ENCODE measurements at regions of chr3 and their contacts with region 1.

Region 1: DNA sequence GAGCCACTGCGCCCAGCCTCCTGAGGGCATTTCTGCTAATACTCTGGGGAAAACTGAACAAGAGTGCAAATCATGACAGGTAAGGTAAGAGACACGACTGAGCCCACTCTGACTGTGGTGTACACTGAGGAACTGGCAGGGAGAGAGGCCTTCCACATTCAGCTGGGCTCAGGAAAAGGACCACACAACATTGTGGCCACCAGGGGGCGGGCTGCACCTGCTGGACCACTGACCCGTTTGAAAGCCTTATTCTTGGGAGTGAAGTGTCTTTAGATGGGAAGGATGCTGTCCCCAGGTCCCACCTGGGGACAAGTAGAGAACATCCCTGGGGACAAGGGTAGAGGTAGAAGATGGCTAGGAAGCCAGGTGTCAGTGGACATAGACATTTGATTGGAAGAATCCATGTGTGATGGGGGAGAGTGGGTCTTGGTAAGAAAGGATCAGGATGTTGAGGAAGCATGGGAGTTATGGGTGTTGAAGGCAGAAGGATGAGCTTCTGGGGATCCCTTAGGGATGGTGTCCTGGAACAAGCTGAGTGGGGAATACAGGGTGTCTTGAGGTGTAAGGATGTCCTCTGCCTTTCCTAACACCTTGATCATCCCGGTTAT is 6.2 kb upstream of the CTDSPL start:
- DNase-seq: peak; percentile 40 to 67
- ATAC-seq: peak in 1 of 2 donors; percentile 61
- H3K4me3 ChIP-seq: no peak overlapping the region
- H3K27ac ChIP-seq: no peak overlapping the region
- H3K4me1 ChIP-seq: peaks cover 0 to 3% of the 10 kb centered on the region in 2 donors
- H3K27me3 ChIP-seq: no peaks in the 10 kb centered on the region
- CTCF ChIP-seq: peak; percentile 77 to 93 (median 89)
- POLR2A ChIP-seq: no peak

Region 2: GRCh38 chr3:37956723-37957528 is 101.5 kb after region 1 on chr3:
- in situ Hi-C with region 1: loop called in 3 of 4 experiments (anchors 5 to 10 kb)
- intact Hi-C with region 1: no loop called
- DNase-seq: no peak
- ATAC-seq: peak in 1 of 2 donors; percentile 51
- H3K4me3 ChIP-seq: no peak overlapping the region
- H3K27ac ChIP-seq: peak overlapping the region; percentile 42 to 66 (median 62)
- H3K4me1 ChIP-seq: peaks cover 8 to 22% of the 10 kb centered on the region in 2 donors
- H3K27me3 ChIP-seq: no peaks in the 10 kb centered on the region
- CTCF ChIP-seq: no peak
- POLR2A ChIP-seq: no peak

Region 3: DNA sequence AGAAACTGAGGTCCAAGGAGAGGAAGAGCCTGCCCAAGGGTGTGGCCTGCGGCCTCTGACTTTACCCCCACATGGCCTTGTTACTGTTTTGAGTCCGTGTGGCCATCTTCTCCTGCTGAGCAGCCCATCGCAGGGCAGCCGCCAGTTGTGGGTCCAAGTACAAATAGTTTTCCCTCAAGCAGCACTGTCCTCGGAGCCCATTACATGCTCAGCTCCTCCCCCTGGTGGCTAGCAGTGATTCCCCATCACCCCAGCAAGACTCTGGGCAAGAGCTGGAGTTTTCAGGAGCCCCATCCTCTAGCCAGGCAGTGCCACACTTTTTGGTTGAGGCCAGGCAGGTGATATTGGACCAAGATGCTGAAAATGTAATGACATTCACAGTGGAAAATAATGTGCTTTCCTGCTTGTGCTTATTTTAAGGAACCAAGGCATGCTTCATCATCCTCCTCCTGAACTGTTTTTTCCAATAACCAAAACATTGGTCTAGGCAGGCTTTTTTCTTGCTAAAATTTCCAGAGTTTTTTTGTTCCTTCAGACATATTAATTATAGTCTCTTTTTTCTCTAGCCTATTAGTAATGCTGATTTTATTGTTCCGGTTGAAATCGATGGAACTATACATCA is 111.9 kb after region 1 on chr3:
- in situ Hi-C with region 1: loop called in 2 of 4 experiments (anchors 10 kb)
- intact Hi-C with region 1: loop called (anchors 1 kb)
- DNase-seq: peak in 1 of 2 donors; percentile 35
- ATAC-seq: peak in 1 of 2 donors; percentile 37
- H3K4me3 ChIP-seq: no peak overlapping the region
- H3K27ac ChIP-seq: no peak overlapping the region
- H3K4me1 ChIP-seq: peaks cover 26 to 31% of the 10 kb centered on the region in 2 donors
- H3K27me3 ChIP-seq: no peaks in the 10 kb centered on the region
- CTCF ChIP-seq: peak; percentile 37 to 78 (median 70)
- POLR2A ChIP-seq: no peak